ENCODE measurements at regions of chr10 and their contacts with region 1.

Region 1: GRCh38 chr10:60646966-60647796 is 131.1 kb upstream of the CDK1 start:
- DNase-seq: peak; percentile 27
- H3K4me3 Mint-ChIP-seq: no peak overlapping the region
- H3K27ac Mint-ChIP-seq: no peak overlapping the region
- H3K4me1 Mint-ChIP-seq: peaks cover 26% of the 10 kb centered on the region
- H3K27me3 Mint-ChIP-seq: no peaks in the 10 kb centered on the region

Region 2: DNA sequence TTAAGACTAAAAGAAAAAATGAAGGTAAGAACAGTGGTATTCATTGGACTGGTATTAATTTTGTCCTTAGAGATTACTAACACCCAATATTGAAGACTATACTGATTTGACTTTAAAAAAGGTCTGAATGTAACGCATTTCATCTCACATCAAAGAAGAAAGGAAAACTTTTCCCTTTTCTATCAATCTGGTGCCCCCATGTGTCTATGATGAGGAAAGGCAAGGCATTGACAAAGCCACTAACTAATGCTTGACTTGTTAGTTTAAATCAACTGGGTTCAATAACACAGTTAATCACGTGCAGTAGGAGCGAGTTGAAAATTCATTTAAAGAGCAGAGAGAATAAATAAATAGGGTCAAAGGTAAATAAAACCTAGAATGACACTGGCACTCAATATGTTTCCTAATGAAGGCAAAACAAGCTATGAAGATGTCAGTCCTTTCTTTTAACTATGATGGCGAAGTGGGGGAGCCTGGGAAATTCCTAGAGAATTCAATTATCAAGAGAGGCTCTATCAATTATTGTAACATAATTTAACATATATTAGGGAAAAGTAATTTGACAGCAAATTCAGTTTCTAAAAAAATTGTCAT is 438.4 kb before region 1 on chr10:
- CTCF ChIA-PET with region 1: interaction called, 4 read pairs
- POLR2A ChIA-PET with region 1: no interaction called
- intact Hi-C with region 1: loop called (anchors 10 kb)
- DNase-seq: no peak
- H3K4me3 Mint-ChIP-seq: no peak overlapping the region
- H3K27ac Mint-ChIP-seq: no peak overlapping the region
- H3K4me1 Mint-ChIP-seq: peaks cover 20% of the 10 kb centered on the region
- H3K27me3 Mint-ChIP-seq: no peaks in the 10 kb centered on the region

Region 3: GRCh38 chr10:60444494-60445064 is 202.6 kb before region 1 on chr10:
- CTCF ChIA-PET with region 1: interaction called, 36 read pairs
- POLR2A ChIA-PET with region 1: no interaction called
- intact Hi-C with region 1: loop called (anchors 1 kb)
- DNase-seq: no peak
- H3K4me3 Mint-ChIP-seq: no peak overlapping the region
- H3K27ac Mint-ChIP-seq: no peak overlapping the region
- H3K4me1 Mint-ChIP-seq: peaks cover 10% of the 10 kb centered on the region
- H3K27me3 Mint-ChIP-seq: no peaks in the 10 kb centered on the region

Region 4: GRCh38 chr10:60549686-60550085 is 97.5 kb before region 1 on chr10:
- CTCF ChIA-PET with region 1: interaction called, 6 read pairs
- POLR2A ChIA-PET with region 1: no interaction called
- intact Hi-C with region 1: loop called (anchors 1 kb)
- DNase-seq: no peak
- H3K4me3 Mint-ChIP-seq: no peak overlapping the region
- H3K27ac Mint-ChIP-seq: no peak overlapping the region
- H3K4me1 Mint-ChIP-seq: no peaks in the 10 kb centered on the region
- H3K27me3 Mint-ChIP-seq: no peaks in the 10 kb centered on the region

Region 5: DNA sequence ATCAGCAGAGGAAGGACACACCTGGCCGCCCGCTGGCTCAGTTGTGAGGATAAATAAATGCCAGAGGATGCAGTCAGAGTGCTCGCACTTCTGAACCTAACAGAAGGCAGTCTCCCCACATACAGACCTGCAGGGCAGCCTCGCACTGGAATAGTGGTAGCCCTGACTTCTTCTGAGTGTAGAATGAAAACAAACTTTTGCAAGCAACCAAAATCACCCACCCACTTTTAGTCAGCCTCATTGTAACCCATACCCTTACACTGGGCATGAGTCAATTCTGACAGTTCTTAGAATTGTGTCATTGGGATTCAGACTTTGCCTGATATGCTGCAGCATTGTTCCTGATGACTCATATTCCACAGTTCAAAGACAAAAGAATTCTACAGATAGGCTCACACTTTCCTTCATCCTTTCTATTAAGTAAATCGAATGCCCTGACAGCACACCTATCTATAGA is 35.9 kb before region 1 on chr10:
- CTCF ChIA-PET with region 1: interaction called, 10 read pairs
- POLR2A ChIA-PET with region 1: no interaction called
- intact Hi-C with region 1: no loop called
- DNase-seq: peak; percentile 51
- H3K4me3 Mint-ChIP-seq: no peak overlapping the region
- H3K27ac Mint-ChIP-seq: peak overlapping the region; percentile 24
- H3K4me1 Mint-ChIP-seq: peaks cover 27% of the 10 kb centered on the region
- H3K27me3 Mint-ChIP-seq: no peaks in the 10 kb centered on the region

Region 6: GRCh38 chr10:61284222-61284890 is 637.2 kb after region 1 on chr10:
- CTCF ChIA-PET with region 1: no interaction called
- POLR2A ChIA-PET with region 1: no interaction called
- intact Hi-C with region 1: loop called (anchors 10 kb)
- DNase-seq: no peak
- H3K4me3 Mint-ChIP-seq: peak overlapping the region; percentile 27
- H3K27ac Mint-ChIP-seq: no peak overlapping the region
- H3K4me1 Mint-ChIP-seq: peaks cover 18% of the 10 kb centered on the region
- H3K27me3 Mint-ChIP-seq: peaks cover 2% of the 10 kb centered on the region